ENCODE measurements at regions of chr17 and their contacts with region 1.

Region 1: DNA sequence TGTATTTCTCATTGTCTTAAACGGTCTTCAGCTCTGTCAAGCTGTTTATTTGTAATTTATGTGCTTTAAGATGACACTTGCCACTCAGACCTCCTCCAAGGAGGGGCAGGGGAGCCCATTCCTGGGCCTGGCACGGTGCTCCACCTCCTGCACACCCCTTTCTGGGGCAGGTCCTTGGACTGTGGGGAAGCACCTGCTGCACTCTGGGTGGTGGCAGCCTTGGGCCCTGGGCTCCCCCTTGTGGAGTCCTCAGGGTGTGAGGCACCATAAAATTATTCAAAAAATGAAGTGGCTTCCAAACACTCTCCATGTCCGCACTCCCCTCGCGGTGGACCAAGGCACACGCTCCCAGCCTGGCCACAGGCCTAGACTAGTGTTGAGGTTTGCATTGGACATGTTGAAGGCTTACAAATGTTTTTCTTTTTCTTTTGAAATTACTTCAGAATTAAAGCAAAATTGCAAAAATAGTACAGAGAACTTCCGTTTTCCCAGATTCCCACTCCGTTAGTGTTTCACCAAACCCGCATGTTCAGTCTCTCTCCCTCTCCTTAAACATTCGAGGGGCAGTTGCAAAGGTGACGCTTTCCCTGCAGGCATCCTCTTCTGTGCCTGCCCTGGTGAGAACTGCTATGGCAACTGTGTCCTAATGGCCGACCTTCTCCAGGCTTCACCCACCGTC is 32.4 kb downstream of the FOXK2 start:
- DNase-seq: peak; percentile 85 to 91
- ATAC-seq: peak; percentile 83
- H3K4me3 ChIP-seq: no peak overlapping the region
- H3K27ac ChIP-seq: peak overlapping the region; percentile 53 to 72
- H3K4me1 ChIP-seq: peaks cover 0 to 2% of the 10 kb centered on the region in 2 donors
- H3K27me3 ChIP-seq: no peaks in the 10 kb centered on the region

Region 2: GRCh38 chr17:82418001-82418986 is 133.6 kb before region 1 on chr17 and contains the starts of genes HEXD and OGFOD3:
- intact Hi-C with region 1: loop called in 1 of 2 experiments (anchors 10 kb)
- DNase-seq: peak; percentile 86 to 93
- ATAC-seq: peak; percentile 93
- H3K4me3 ChIP-seq: peak within 1 kb of the TSS; percentile 59 to 85
- H3K27ac ChIP-seq: peak within 1 kb of the TSS in 1 of 2 donors; percentile 74
- H3K4me1 ChIP-seq: no peaks in the 10 kb centered on the region
- H3K27me3 ChIP-seq: no peaks in the 10 kb centered on the region
- total RNA-seq, gene HEXD: 14.8 to 34.7 TPM
- total RNA-seq, gene OGFOD3: 17.5 to 22.2 TPM

Region 3: DNA sequence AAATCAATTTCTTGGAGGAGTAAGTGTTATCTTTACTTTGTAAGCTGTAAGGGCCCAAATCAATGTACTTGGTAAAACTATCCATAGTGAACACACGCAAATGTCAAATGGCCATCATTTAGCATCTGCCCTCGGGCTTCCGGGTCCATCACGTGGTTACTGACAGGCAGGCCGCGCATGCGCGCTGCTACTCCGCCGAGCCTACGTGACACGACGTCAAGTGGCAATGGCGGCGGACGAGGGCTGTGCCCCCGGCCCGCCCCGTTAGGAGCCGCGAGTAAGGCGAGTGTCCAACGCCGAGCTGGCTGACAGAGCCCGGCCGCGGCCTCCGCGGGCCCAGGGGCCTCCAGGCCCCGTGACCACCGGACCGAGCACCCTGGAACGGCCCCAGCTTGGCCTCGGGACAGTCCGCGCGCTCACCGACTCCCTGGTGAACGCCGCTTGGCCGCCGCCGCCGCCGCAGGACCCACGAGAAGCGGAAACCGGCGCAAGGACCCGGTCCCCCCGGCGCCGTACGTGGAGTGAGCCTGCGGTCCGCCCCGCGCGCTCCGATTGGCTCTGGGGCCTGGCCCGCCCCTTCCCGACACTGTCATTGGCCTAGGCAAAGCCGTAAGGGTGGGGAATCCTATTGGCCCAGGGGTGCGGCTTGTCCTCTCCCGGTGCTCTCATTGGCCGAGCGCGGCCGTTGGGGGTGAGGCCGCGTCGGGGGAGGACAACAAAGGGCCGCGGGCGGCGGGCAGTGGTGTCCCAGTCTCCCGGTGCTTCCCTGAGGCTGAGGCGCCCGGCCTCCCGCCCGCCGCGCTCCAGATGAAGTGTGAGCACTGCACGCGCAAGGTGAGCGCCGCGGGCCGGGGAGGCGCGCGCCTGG is 93.7 kb before region 1 on chr17 and contains the start of gene NARF:
- intact Hi-C with region 1: loop called in 1 of 2 experiments (anchors 10 kb)
- DNase-seq: peak; percentile 98
- ATAC-seq: peak; percentile 100
- H3K4me3 ChIP-seq: peak within 1 kb of the TSS; percentile 85 to 94
- H3K27ac ChIP-seq: peak within 1 kb of the TSS; percentile 98 to 100
- H3K4me1 ChIP-seq: peaks cover 0 to 2% of the 10 kb centered on the region in 2 donors
- H3K27me3 ChIP-seq: no peaks in the 10 kb centered on the region
- total RNA-seq, gene NARF: 45.9 to 76.0 TPM

Region 4: DNA sequence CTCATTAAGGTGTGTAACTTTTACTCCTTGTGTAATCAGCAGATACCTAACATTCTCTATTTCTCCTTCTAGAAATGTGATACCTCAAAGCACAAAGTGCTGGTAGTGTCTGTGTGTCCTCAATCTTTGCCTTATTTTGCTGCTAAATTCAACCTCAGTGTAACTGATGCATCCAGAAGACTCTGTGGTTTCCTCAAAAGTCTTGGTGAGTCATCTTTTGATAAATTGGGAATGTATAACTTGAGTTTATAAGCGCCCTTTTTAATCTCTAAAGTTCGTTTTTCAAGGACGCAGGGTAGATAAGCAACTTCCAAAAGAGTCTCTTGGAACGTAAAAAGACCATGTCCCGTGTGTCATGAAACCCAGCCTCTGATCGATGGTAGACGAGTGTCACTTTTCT is 83.2 kb before region 1 on chr17:
- intact Hi-C with region 1: no loop called
- DNase-seq: no peak
- ATAC-seq: no peak
- H3K4me3 ChIP-seq: no peak overlapping the region
- H3K27ac ChIP-seq: no peak overlapping the region
- H3K4me1 ChIP-seq: no peaks in the 10 kb centered on the region
- H3K27me3 ChIP-seq: no peaks in the 10 kb centered on the region

Region 5: GRCh38 chr17:82494236-82495055 is 57.5 kb before region 1 on chr17:
- intact Hi-C with region 1: loop called in 1 of 2 experiments (anchors 5 kb)
- DNase-seq: peak; percentile 94 to 95
- ATAC-seq: peak; percentile 90
- H3K4me3 ChIP-seq: no peak overlapping the region
- H3K27ac ChIP-seq: peak overlapping the region in 1 of 2 donors; percentile 12
- H3K4me1 ChIP-seq: no peaks in the 10 kb centered on the region
- H3K27me3 ChIP-seq: no peaks in the 10 kb centered on the region

Region 6: GRCh38 chr17:82502207-82502606 is 49.7 kb before region 1 on chr17:
- intact Hi-C with region 1: loop called in 1 of 2 experiments (anchors 5 kb)
- DNase-seq: peak; percentile 64 to 83
- ATAC-seq: no peak
- H3K4me3 ChIP-seq: no peak overlapping the region
- H3K27ac ChIP-seq: peak overlapping the region in 1 of 2 donors; percentile 26
- H3K4me1 ChIP-seq: no peaks in the 10 kb centered on the region
- H3K27me3 ChIP-seq: no peaks in the 10 kb centered on the region

Region 7: DNA sequence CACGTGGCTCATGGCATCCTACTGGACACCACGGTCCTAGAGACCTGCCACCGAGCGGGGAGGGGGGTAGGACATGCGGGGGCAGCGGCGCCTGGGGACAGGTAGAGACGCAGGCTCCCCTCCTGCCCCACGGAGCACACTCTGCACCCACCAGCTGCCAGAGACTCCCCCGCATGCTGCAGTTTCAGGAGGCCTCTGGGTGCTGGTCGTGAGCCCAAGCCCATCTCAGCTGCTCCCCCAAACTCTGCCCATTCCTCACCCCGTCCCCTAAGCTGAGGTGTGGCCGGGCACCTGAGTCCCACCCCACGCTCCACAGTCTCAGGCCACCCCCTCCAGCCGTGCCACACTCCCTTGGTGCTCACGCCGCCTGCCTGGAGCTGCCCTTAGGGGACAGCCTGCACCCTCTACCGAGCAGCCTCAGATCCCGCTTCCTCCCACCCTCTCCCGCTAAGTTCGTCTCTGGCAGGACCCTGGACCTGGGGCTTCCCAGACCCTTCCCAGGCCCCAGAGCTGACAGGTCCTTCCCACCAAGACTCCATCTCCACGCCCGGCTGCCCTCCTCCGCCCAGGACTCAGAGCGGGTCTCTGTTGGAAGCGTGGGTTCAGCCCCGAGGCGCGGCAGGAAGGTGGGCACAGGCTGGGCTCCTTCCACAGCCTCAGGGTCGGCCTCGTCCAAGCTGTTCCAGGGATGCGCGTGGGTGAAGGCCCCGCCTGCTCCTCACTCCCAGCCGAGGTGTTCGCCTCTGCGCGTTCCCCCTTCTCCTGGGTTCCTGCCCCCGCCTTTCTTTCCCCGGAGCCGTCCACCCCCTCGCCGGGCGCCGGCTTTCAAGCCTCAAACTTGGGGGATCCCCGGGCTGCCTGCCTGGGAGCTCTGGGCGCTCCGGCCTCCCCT is 145.2 kb after region 1 on chr17:
- intact Hi-C with region 1: no loop called
- DNase-seq: no peak
- ATAC-seq: no peak
- H3K4me3 ChIP-seq: peak overlapping the region; percentile 92 to 93
- H3K27ac ChIP-seq: no peak overlapping the region
- H3K4me1 ChIP-seq: no peaks in the 10 kb centered on the region
- H3K27me3 ChIP-seq: no peaks in the 10 kb centered on the region

Measured in aorta (tissue), 5 donors.